GM12878 (cell line): ENCODE measurements at regions of chr10 and their contacts with region 1.

Region 1: GRCh38 chr10:24920907-24921881 is 31.2 kb downstream of the PRTFDC1 start:
- DNase-seq: peak; percentile 67
- ATAC-seq: peak; percentile 95
- H3K4me3 ChIP-seq: no peak overlapping the region
- H3K27ac ChIP-seq: peak overlapping the region; percentile 69
- H3K4me1 ChIP-seq: peaks cover 9% of the 10 kb centered on the region
- H3K27me3 ChIP-seq: no peaks in the 10 kb centered on the region
- CTCF ChIP-seq: no peak
- EP300 ChIP-seq: peak; percentile 86 to 91
- POLR2A ChIP-seq: no peak
- RAD21 ChIP-seq: peak; percentile 12; the same call in 1 of the 2 replicates

Region 2: GRCh38 chr10:24652381-24652957 is 268.7 kb before region 1 on chr10:
- CTCF ChIA-PET with region 1: no interaction called
- POLR2A ChIA-PET with region 1: no interaction called
- RAD21 ChIA-PET with region 1: no interaction called
- SMC1A ChIA-PET with region 1: interaction called, 5 read pairs
- in situ Hi-C with region 1: no loop called
- intact Hi-C with region 1: loop called (anchors 5 kb)
- DNase-seq: peak; percentile 62
- ATAC-seq: peak; percentile 93
- H3K4me3 ChIP-seq: peak overlapping the region; percentile 46
- H3K27ac ChIP-seq: peak overlapping the region; percentile 76
- H3K4me1 ChIP-seq: peaks cover 15% of the 10 kb centered on the region
- H3K27me3 ChIP-seq: no peaks in the 10 kb centered on the region
- CTCF ChIP-seq: no peak
- EP300 ChIP-seq: peak; percentile 42 to 82; a peak in 3 of 4 replicates
- POLR2A ChIP-seq: no peak
- RAD21 ChIP-seq: no peak

Region 3: GRCh38 chr10:24908793-24909423 is 12.3 kb before region 1 on chr10:
- CTCF ChIA-PET with region 1: interaction called, 9 read pairs
- POLR2A ChIA-PET with region 1: interaction called, 18 read pairs
- RAD21 ChIA-PET with region 1: interaction called, 193 read pairs
- SMC1A ChIA-PET with region 1: interaction called, 338 read pairs
- in situ Hi-C with region 1: no loop called
- intact Hi-C with region 1: no loop called
- DNase-seq: no peak
- ATAC-seq: peak; percentile 65
- H3K4me3 ChIP-seq: no peak overlapping the region
- H3K27ac ChIP-seq: no peak overlapping the region
- H3K4me1 ChIP-seq: no peaks in the 10 kb centered on the region
- H3K27me3 ChIP-seq: no peaks in the 10 kb centered on the region
- CTCF ChIP-seq: no peak
- EP300 ChIP-seq: no peak
- POLR2A ChIP-seq: no peak
- RAD21 ChIP-seq: no peak

Region 4: GRCh38 chr10:25026463-25026862 is 105.3 kb after region 1 on chr10:
- CTCF ChIA-PET with region 1: no interaction called
- POLR2A ChIA-PET with region 1: no interaction called
- RAD21 ChIA-PET with region 1: no interaction called
- SMC1A ChIA-PET with region 1: no interaction called
- in situ Hi-C with region 1: no loop called
- intact Hi-C with region 1: no loop called
- DNase-seq: no peak
- ATAC-seq: no peak
- H3K4me3 ChIP-seq: no peak overlapping the region
- H3K27ac ChIP-seq: no peak overlapping the region
- H3K4me1 ChIP-seq: no peaks in the 10 kb centered on the region
- H3K27me3 ChIP-seq: no peaks in the 10 kb centered on the region
- CTCF ChIP-seq: no peak; a peak in 1 of 6 replicates
- EP300 ChIP-seq: no peak
- POLR2A ChIP-seq: no peak
- RAD21 ChIP-seq: 0 out of 2 replicates have a peak, but pooled peaks have one; percentile 6